A673 (cell line): ENCODE measurements at regions of chr5 and their contacts with region 1.

Region 1: GRCh38 chr5:138641547-138642298 is 66.5 kb upstream of the HSPA9 start:
- DNase-seq: peak; percentile 89
- H3K4me3 ChIP-seq: no peak overlapping the region
- H3K27ac ChIP-seq: no peak overlapping the region
- H3K4me1 ChIP-seq: no peaks in the 10 kb centered on the region
- H3K27me3 ChIP-seq: no peaks in the 10 kb centered on the region
- CTCF ChIP-seq: peak; percentile 94

Region 2: DNA sequence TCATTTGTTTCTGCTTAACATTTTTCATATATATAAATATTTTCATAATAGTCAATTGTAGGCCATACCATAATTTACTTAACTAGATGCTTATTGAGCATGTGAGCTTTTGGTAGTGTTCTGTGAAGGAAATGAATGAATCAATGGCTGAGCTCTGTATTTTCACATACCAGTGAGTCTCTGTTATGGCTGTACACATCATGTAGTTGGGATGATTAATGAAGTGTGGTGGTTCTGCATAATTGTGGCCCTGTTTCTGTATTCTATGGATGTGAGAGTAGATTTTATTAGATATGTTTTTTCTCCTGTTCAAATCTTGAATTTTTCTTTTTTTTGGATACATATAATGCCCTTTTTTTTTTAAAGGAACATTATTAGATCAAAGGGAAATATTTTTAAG is 167.7 kb after region 1 on chr5:
- CTCF ChIA-PET with region 1: no interaction called
- POLR2A ChIA-PET with region 1: no interaction called
- intact Hi-C with region 1: no loop called
- DNase-seq: no peak
- H3K4me3 ChIP-seq: no peak overlapping the region
- H3K27ac ChIP-seq: no peak overlapping the region
- H3K4me1 ChIP-seq: peaks cover 6% of the 10 kb centered on the region
- H3K27me3 ChIP-seq: no peaks in the 10 kb centered on the region
- CTCF ChIP-seq: no peak

Region 3: DNA sequence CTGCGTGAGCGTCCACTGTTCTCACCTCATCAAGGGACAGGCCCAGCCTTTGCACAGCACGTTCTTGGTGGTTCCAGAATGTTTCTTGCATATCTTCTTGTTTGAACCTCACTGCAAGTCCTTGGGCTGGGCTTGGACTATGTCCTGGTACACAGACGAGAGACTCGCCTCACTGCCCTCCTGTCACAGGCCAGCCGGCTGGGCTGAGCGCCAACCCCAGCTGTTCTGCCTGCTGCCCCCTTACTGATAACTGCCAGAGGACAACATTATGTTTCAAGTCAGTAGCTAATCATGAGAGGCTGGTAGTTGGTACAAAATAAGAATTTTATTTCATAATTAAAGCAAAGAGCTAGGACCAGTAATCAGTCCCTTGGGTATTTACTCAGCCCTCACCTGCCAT is 286.3 kb after region 1 on chr5:
- CTCF ChIA-PET with region 1: no interaction called
- POLR2A ChIA-PET with region 1: no interaction called
- intact Hi-C with region 1: loop called (anchors 10 kb)
- DNase-seq: no peak
- H3K4me3 ChIP-seq: no peak overlapping the region
- H3K27ac ChIP-seq: no peak overlapping the region
- H3K4me1 ChIP-seq: no peaks in the 10 kb centered on the region
- H3K27me3 ChIP-seq: no peaks in the 10 kb centered on the region
- CTCF ChIP-seq: no peak

Region 4: DNA sequence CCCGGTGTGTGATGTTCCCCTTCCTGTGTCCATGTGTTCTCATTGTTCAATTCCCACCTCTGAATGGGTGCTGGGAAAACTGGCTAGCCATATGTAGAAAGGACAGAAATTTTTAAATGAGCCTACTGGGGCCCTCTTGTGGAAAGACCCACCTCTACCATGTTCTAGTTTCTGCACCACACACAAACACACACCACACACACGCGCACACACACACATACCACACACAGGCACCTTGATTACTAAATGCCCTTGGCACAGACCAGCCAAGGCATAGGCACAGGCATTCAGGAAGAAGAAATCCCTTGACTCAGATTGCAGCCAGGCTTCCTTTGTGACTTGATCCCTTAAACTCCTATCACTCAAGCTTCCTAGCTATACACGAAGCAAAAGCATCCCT is 496.0 kb after region 1 on chr5:
- CTCF ChIA-PET with region 1: no interaction called
- POLR2A ChIA-PET with region 1: no interaction called
- intact Hi-C with region 1: loop called (anchors 5 kb)
- DNase-seq: peak; percentile 54
- H3K4me3 ChIP-seq: no peak overlapping the region
- H3K27ac ChIP-seq: no peak overlapping the region
- H3K4me1 ChIP-seq: no peaks in the 10 kb centered on the region
- H3K27me3 ChIP-seq: no peaks in the 10 kb centered on the region
- CTCF ChIP-seq: peak; percentile 55

Region 5: DNA sequence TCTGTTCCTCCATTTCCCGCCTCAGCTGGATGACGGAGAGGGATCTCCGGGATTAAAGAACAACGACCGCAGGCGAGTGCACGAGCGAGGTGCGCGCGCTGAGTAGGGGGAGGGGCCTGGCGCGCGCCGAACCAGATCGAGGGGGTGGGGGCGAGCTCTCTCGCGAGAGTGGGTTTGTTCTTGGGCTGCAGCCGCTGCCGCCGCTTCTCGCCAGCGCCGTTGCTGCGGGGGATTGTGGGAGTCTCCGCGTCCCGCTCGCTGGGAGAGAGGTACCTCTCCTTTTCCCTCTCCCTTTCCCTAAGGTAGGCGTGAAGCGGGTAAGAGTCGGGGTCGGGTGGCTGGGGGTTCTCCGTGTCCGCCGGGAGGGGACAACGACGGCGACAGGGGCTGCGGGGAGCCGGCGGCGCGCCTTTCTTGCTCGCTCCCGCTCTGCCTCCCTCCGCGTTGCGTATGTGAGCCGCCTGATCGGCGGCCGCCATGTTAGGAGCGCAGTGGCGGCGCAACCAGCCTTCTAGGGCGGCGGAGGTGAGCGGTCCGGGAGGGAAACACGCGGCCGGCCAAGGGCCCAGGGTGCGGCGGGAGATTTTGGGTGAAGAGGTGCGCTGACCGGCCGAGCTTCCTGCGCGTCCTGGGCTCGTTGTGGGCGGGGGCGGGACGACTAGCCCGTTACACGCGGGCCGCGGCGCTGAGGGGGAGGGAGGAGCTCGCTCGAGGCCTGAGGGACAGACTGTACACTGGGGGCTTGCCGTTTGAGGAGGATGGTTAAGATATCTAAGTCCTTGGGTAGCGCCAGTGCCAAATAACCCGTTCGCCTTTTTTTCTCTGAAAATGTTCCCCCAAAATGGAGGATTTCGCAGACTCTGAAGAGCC is 652.0 kb after region 1 on chr5 and contains the start of gene MATR3:
- CTCF ChIA-PET with region 1: no interaction called
- POLR2A ChIA-PET with region 1: interaction called, 12 read pairs
- intact Hi-C with region 1: no loop called
- DNase-seq: peak; percentile 98
- H3K4me3 ChIP-seq: peak within 1 kb of the TSS; percentile 76
- H3K27ac ChIP-seq: peak within 1 kb of the TSS; percentile 99
- H3K4me1 ChIP-seq: peaks cover 27% of the 10 kb centered on the region
- H3K27me3 ChIP-seq: no peaks in the 10 kb centered on the region
- CTCF ChIP-seq: no peak
- total RNA-seq, gene MATR3: 286 and 299 TPM in 2 replicates

Region 6: DNA sequence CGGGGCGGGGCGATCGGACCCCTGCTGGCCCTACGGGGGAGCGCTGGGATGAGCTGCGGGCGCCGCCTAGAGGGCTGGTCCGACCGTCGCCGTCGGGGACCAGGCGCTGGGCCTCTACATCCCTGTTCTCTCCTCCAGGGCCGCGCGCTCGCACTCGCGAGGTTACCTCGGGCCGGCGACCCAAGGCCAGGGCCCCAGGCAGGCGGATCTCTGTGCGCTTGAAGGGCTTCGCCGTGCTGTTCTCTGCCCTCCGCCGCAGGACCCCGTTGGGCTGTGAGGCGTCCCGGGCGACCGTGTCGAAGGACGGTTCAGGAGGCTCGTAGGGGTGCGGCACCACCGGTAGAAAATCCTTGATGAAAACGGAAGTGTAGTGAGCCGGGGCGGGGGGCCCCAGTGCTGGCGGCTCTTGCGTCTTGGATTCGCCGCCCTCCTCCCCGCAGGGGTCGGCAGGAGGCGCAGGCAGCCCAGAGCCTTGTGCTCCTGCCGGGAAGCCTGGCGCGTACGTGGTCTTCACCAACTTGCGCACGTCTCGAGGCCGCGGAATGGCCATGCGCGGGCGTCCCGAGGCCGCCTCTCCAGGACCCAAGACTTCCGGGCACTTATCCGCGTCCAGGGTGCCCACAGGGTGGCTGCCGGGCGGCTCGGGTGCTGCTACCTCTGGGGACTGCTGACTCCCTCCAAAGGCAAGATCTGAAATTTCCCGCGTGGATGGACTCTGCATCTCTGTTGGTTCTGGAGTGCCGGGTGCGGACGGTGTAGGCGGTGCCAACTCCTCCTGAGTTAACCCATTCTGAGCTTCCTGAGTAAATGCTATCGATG is 751.2 kb after region 1 on chr5:
- CTCF ChIA-PET with region 1: no interaction called
- POLR2A ChIA-PET with region 1: no interaction called
- intact Hi-C with region 1: loop called (anchors 5 kb)
- DNase-seq: peak; percentile 88
- H3K4me3 ChIP-seq: peak overlapping the region; percentile 60
- H3K27ac ChIP-seq: peak overlapping the region; percentile 50
- H3K4me1 ChIP-seq: peaks cover 19% of the 10 kb centered on the region
- H3K27me3 ChIP-seq: peaks cover 14% of the 10 kb centered on the region
- CTCF ChIP-seq: peak; percentile 74